Activated B cell treated with CpG ODN at 0.5 μM for 24 hours (primary cell): ENCODE measurements at regions of chr20 and their contacts with region 1.

Region 1: DNA sequence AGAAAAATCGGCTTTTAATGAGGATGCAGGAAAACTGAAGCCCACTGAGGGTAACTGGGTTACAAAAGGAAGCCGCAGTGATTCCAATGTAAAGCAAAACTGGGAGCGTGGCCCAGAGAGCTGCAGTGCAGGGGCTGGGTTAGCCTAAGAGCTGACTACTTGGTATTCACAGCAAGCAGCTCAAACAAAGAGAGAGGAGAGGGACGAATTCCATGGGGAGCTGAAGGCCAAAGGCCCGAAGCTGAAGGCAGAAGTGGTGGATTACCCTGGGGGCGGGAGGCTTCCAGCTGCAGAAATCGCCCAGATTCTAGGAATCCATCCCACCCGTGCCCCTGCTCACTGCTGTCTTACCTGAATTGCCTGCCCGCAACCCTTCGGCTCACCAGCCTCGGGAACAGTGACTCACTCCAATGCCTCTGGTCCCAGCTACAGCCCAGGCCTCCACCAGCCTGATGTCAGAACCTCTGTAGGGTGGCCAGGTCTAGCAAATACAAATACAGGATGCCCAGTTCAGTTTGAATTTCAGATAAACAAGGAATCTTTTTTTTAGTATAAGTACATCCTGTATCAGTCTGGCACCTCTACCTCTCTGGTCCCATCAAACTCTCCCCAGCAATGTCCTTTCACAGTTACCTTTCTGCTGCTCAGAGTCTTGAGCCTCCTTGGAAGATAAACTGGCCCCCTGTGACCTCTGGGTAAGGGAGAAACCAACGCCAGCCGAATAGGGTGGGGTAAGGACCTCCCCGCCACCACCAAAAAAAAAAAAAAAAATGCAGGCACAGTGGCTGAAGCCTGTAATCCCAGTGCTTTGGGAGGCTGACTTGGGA is 14.6 kb upstream of the ZMYND8 start:
- DNase-seq: no peak
- ATAC-seq: no peak
- H3K4me3 Mint-ChIP-seq: no peak overlapping the region
- H3K27ac Mint-ChIP-seq: no peak overlapping the region
- H3K4me1 Mint-ChIP-seq: peaks cover 2% of the 10 kb centered on the region
- H3K27me3 Mint-ChIP-seq: no peaks in the 10 kb centered on the region
- CTCF ChIP-seq: no peak

Region 2: DNA sequence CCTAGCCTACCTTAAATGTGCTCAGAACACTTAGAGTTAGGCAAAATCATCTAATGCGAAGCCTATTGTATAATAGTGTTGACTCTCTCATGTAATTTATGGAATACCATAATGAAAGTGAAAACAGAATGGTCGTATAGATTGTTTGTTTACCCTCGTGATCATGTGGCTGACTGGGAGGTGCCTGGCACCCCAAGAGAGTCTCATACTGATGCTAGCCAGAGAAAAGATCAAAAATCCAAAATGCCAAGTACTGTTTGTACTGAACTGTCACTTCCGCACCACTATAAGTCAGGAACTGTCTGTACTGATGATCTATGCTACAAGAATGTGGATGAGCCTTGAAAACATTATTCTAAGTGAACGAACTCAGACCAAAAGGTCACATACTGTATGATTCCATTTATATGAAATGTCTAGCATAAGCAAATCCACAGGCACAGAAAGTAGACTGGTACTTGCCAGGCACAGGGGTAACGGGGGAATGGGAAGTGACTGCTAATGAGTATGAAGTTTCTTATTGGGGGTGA is 37.0 kb before region 1 on chr20:
- CTCF ChIA-PET with region 1: no interaction called
- POLR2A ChIA-PET with region 1: no interaction called
- intact Hi-C with region 1: loop called (anchors 5 kb)
- DNase-seq: no peak
- ATAC-seq: no peak
- H3K4me3 Mint-ChIP-seq: peak overlapping the region; percentile 40
- H3K27ac Mint-ChIP-seq: peak overlapping the region; percentile 64
- H3K4me1 Mint-ChIP-seq: peaks cover 57% of the 10 kb centered on the region
- H3K27me3 Mint-ChIP-seq: no peaks in the 10 kb centered on the region
- CTCF ChIP-seq: no peak